Common myeloid progenitor, CD34-positive (primary cell): ENCODE measurements at regions of chr17 and their contacts with region 1.

Region 1: DNA sequence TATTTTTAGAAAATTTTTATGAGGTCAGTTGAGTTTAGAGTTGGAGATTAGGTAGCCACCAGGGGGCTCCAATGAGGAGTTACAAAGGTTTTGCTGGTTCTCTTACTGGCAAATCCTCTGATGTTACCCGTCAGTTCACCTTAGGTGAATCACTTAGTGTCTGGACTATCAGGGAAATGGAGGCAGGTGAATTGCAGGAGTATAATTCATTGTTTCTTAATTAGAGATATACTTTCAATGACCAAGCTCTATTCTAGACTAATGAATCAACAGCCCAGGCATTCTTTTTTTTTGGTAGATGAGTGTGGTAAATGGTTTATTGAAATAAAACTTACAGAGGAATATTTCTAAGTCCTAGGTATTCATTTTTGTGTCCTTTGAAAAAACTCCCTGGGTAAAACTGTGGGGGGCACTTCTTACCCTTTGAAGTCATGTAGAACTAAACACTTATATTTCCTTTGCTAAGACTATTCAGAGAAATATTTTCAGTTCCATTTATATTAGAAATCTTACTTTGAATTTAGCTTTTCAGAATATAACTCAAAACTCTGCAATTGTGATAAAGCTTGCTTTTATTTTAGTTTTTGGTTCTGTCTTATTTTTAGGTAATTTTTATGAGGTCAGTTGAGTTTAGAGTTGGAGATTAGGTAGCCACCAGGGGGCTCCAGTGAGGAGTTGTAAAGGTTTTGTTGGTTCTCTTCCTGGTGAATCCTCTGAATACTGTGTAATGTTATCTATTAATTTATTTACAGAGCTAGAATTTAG is 17.7 kb downstream of the PSMD11 start:
- DNase-seq: peak; percentile 61 to 82 (median 79)
- H3K4me3 ChIP-seq: no peak overlapping the region
- H3K27ac ChIP-seq: no peak overlapping the region
- H3K4me1 ChIP-seq: no peaks in the 10 kb centered on the region
- H3K27me3 ChIP-seq: no peaks in the 10 kb centered on the region

Region 2: DNA sequence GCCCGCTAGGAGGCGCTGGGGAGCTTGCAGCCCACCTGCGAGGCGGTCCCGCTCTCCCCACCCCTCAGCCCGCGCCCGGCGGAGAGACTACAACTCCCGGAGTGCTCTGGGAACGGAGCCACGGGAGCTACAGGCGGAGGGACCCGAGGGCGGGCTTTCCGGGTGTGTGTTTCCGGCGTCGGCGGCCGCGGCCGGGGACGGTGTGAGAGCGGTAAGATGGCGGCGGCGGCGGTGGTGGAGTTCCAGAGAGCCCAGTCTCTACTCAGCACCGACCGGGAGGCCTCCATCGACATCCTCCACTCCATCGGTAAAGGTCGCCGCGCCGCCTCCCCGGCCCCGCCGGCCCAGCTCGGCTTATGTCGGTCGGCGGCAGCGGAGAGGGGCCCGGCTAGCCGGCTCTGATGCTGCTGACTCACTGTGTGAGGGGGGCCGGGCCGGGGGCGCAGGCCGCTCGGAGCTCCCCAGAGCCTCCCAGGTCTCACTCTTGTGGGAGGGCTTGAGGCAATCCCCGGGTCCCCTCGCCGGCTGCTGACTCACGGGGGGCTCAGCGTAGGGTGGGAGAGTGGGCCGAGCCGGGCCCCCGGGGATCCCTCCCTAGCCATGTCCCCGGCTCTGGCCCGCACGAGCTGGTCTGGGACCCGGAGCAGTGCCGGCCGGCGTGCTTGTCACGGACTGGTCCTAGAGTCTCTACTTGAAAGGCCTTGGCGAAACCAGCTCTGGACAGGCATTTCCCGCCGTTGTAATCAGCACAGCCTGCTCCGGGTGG is 17.5 kb before region 1 on chr17 and contains the start of gene PSMD11:
- CTCF ChIA-PET with region 1: interaction called, 78 read pairs
- POLR2A ChIA-PET with region 1: no interaction called
- DNase-seq: peak; percentile 98 to 99 (median 99)
- H3K4me3 ChIP-seq: peak within 1 kb of the TSS; percentile 86 to 99 (median 95)
- H3K27ac ChIP-seq: peak within 1 kb of the TSS; percentile 89 to 94
- H3K4me1 ChIP-seq: peaks cover 9 to 21% (median 15%) of the 10 kb centered on the region in 4 experiments
- H3K27me3 ChIP-seq: peaks cover 0 to 2% (median 0%) of the 10 kb centered on the region in 5 experiments

Region 3: GRCh38 chr17:32588982-32589381 is 126.9 kb after region 1 on chr17:
- CTCF ChIA-PET with region 1: no interaction called
- POLR2A ChIA-PET with region 1: no interaction called
- DNase-seq: peak in 2 of 3 donors; percentile 19 to 27
- H3K4me3 ChIP-seq: no peak overlapping the region
- H3K27ac ChIP-seq: no peak overlapping the region
- H3K4me1 ChIP-seq: no peaks in the 10 kb centered on the region
- H3K27me3 ChIP-seq: no peaks in the 10 kb centered on the region

Region 4: DNA sequence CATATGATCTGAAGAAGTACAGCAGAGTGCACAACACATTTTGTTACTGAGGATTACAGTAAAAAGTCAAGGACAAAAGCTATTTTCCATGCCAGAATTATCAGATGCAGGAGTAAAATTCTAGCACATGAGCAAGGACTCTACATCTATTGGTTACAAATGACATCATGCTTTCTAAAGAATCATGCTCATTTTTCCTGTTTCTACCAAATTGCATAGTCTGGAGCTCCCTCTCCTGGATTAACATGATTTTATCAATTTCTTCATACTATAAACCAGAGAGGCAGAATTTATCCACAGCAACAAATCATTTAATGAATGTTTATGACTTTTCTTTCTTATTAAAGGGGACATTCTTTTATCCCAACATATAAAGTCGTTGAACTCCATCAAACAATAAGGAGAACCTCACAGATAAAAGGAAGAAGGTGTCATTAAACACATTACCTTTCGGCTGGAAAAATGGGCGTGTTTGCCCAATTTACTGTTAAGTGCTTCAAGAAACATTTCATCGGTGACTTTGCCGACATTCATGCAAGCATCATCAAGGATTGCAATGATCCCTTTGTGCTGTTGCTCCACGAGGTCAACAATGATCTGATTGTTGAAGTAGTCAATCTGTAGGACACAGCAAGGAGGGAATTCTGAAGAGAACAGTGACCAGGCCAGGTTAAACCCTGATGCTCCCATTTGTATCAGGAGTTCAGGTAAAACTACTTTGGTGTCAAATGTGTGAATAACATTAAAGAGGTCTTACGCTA is 293.2 kb after region 1 on chr17:
- CTCF ChIA-PET with region 1: interaction called, 33 read pairs
- POLR2A ChIA-PET with region 1: no interaction called
- DNase-seq: peak; percentile 75 to 85 (median 82)
- H3K4me3 ChIP-seq: no peak overlapping the region
- H3K27ac ChIP-seq: no peak overlapping the region
- H3K4me1 ChIP-seq: no peaks in the 10 kb centered on the region
- H3K27me3 ChIP-seq: no peaks in the 10 kb centered on the region